Activated CD8-positive, alpha-beta T cell treated with anti-CD3 and anti-CD28 coated beads for 36 hours (primary cell): ENCODE measurements at regions of chr6 and their contacts with region 1.

Region 1: DNA sequence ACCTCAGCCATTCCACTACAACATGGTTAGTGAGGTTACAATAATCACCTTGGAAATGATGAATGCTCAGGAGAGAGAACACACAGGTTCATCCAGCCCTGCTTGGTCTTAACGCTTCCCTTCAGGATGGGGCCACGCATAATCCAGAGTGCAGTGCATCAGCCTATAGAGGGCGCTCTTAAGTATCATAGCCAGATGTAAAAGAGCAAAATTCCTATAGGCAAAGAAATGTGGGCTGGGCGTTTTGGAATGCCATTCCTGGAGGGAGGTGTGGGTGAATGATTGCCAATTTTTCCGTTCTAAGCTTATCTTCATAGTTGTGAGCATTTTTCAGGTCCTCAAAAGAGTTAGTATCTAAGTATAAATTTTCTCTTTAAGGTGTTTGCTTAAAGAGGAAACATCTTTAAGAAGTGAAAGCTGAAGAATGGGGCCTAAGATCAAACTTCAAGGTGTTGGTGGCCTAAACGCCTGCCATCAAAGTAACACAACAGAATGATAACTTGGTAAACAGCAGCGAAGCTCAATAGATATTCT is 1.8 kb downstream of the RIPOR2 start:
- DNase-seq: peak; percentile 61
- ATAC-seq: no peak
- H3K4me3 Mint-ChIP-seq: peak overlapping the region; percentile 92
- H3K27ac Mint-ChIP-seq: peak overlapping the region; percentile 95
- H3K4me1 Mint-ChIP-seq: peaks cover 73% of the 10 kb centered on the region
- H3K27me3 Mint-ChIP-seq: no peaks in the 10 kb centered on the region
- CTCF ChIP-seq: peak; percentile 97

Region 2: GRCh38 chr6:24864343-24864742 is 69.6 kb before region 1 on chr6:
- CTCF ChIA-PET with region 1: interaction called, 128 read pairs
- POLR2A ChIA-PET with region 1: interaction called, 6 read pairs
- intact Hi-C with region 1: no loop called
- DNase-seq: no peak
- ATAC-seq: no peak
- H3K4me3 Mint-ChIP-seq: no peak overlapping the region
- H3K27ac Mint-ChIP-seq: peak overlapping the region; percentile 86
- H3K4me1 Mint-ChIP-seq: peaks cover 84% of the 10 kb centered on the region
- H3K27me3 Mint-ChIP-seq: no peaks in the 10 kb centered on the region
- CTCF ChIP-seq: no peak

Region 3: DNA sequence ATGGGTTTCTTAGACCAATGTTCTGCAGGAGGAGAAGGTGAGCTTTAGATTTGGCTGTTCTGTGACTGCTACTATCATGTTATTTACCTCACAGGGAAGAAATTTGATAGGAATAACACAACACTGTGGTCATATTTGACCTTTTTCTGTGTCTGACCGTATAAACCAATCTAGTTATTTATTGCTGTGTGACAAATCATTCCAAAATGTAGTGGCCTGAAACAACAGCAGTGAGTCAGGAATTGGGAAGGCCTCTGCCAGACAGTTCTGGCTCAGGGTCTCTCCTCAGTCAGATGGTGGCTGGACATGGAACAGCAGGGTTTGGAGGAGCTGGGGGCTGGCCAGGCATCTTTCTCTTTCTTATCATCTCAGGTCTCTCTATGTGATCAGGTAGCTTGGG is 31.2 kb before region 1 on chr6:
- CTCF ChIA-PET with region 1: interaction called, 237 read pairs
- POLR2A ChIA-PET with region 1: interaction called, 191 read pairs
- intact Hi-C with region 1: no loop called
- DNase-seq: no peak
- ATAC-seq: no peak
- H3K4me3 Mint-ChIP-seq: no peak overlapping the region
- H3K27ac Mint-ChIP-seq: peak overlapping the region; percentile 87
- H3K4me1 Mint-ChIP-seq: peaks cover 90% of the 10 kb centered on the region
- H3K27me3 Mint-ChIP-seq: no peaks in the 10 kb centered on the region
- CTCF ChIP-seq: no peak

Region 4: GRCh38 chr6:24949020-24949569 is 15.2 kb after region 1 on chr6:
- CTCF ChIA-PET with region 1: interaction called, 155 read pairs
- POLR2A ChIA-PET with region 1: interaction called, 80 read pairs
- intact Hi-C with region 1: no loop called
- DNase-seq: peak; percentile 64
- ATAC-seq: peak; percentile 50
- H3K4me3 Mint-ChIP-seq: peak overlapping the region; percentile 37
- H3K27ac Mint-ChIP-seq: peak overlapping the region; percentile 88
- H3K4me1 Mint-ChIP-seq: peaks cover 70% of the 10 kb centered on the region
- H3K27me3 Mint-ChIP-seq: no peaks in the 10 kb centered on the region
- CTCF ChIP-seq: no peak

Region 5: GRCh38 chr6:24980507-24981387 is 46.8 kb after region 1 on chr6:
- CTCF ChIA-PET with region 1: interaction called, 27 read pairs
- POLR2A ChIA-PET with region 1: interaction called, 4 read pairs
- intact Hi-C with region 1: no loop called
- DNase-seq: no peak
- ATAC-seq: peak; percentile 73
- H3K4me3 Mint-ChIP-seq: no peak overlapping the region
- H3K27ac Mint-ChIP-seq: no peak overlapping the region
- H3K4me1 Mint-ChIP-seq: peaks cover 43% of the 10 kb centered on the region
- H3K27me3 Mint-ChIP-seq: no peaks in the 10 kb centered on the region
- CTCF ChIP-seq: no peak

Region 6: DNA sequence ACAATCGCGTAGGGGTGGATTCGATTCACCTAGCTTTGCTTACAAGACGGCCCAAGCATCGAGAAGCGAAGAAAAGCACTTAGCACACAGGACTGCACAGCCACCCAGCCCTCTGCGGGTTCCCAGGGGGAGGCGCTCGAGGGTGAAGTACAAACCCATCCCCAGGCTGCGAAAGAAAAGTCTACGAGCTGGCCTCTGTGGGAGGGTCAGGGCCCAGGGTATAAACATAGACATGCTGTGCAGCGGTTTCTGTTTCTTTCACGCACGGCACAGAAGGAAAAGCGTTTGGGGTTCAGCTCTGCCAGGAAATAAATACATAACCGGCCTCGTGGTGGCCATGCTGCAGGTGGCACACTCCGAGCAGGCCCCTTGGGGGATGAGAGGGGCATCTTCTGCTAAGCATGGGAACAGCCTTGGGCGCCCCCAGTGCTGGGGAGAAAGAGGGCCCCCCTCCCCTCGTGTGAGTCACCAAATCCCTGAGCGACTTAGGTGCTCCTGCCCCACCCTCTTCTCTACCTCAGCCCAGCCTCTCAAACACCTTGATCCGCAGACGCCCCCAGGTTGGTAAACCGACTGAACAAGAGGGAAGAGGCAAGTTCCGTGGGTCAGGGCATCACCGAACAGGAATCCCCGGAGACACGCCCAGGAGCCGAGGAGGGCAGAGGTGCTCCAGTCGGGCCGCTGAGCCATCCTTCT is 93.4 kb after region 1 on chr6:
- CTCF ChIA-PET with region 1: interaction called, 31 read pairs
- POLR2A ChIA-PET with region 1: interaction called, 4 read pairs
- intact Hi-C with region 1: no loop called
- DNase-seq: peak; percentile 90
- ATAC-seq: peak; percentile 96
- H3K4me3 Mint-ChIP-seq: peak overlapping the region; percentile 65
- H3K27ac Mint-ChIP-seq: peak overlapping the region; percentile 81
- H3K4me1 Mint-ChIP-seq: peaks cover 45% of the 10 kb centered on the region
- H3K27me3 Mint-ChIP-seq: no peaks in the 10 kb centered on the region
- CTCF ChIP-seq: peak; percentile 42

Region 7: DNA sequence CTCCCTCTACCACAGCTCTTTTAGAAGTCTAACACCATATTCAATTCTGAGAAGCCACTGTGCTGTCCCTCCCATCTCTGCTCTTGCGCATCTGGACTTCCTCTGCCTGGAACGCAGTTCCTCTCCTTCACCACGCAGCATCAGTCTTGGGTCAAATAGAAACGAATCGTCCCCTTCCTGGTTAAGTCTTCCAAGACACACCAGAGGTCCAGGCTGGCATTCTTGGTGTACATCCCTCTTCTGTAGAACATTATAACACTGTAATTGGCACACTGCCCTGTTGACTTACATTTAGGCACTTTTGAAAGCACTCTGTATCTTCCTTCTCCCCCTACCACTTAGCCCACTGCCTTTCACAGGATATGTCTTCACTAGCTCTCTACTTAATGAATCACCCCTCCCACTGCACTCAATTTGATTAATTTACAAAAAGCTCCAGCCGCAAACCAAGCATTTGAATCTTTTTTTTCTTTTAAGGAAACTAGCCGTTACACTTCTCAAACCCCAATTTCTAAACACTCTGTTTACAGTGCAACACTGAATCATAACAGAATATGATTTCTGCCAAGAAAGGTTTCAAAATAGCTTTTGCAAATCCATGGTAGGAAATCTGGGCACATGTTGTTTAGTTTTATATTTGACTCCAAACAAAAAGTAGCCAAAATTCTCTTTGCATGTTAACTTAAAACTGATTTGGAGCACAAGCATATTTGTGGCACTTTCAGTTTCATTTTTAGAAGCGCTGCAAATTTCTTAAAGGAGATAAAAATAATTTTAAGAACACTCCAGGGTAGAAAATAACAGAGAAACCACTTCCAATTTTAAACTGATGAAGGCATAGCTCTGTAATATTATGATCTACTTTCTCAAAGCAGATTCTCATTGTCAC is 204.5 kb after region 1 on chr6:
- CTCF ChIA-PET with region 1: no interaction called
- POLR2A ChIA-PET with region 1: interaction called, 3 read pairs
- intact Hi-C with region 1: loop called (anchors 2 kb)
- DNase-seq: peak; percentile 82
- ATAC-seq: peak; percentile 91
- H3K4me3 Mint-ChIP-seq: peak overlapping the region; percentile 88
- H3K27ac Mint-ChIP-seq: peak overlapping the region; percentile 98
- H3K4me1 Mint-ChIP-seq: peaks cover 40% of the 10 kb centered on the region
- H3K27me3 Mint-ChIP-seq: no peaks in the 10 kb centered on the region
- CTCF ChIP-seq: peak; percentile 21